Activated CD4-positive, alpha-beta memory T cell treated with anti-CD3 and anti-CD28 coated beads for 36 hours (primary cell): ENCODE measurements at regions of chr9 and their contacts with region 1.

Region 1: GRCh38 chr9:98045234-98046179 is 11.0 kb upstream of the NANS start:
- DNase-seq: peak; percentile 44
- H3K4me3 Mint-ChIP-seq: peak overlapping the region; percentile 84
- H3K27ac Mint-ChIP-seq: peak overlapping the region; percentile 83
- H3K4me1 Mint-ChIP-seq: peaks cover 24% of the 10 kb centered on the region
- H3K27me3 Mint-ChIP-seq: no peaks in the 10 kb centered on the region

Region 2: GRCh38 chr9:98056269-98057137 is 11.0 kb after region 1 on chr9 and contains the start of gene NANS:
- CTCF ChIA-PET with region 1: interaction called, 15 read pairs
- POLR2A ChIA-PET with region 1: interaction called, 36 read pairs
- intact Hi-C with region 1: loop called (anchors 1 kb)
- DNase-seq: peak; percentile 95
- H3K4me3 Mint-ChIP-seq: peak within 1 kb of the TSS; percentile 92
- H3K27ac Mint-ChIP-seq: peak within 1 kb of the TSS; percentile 91
- H3K4me1 Mint-ChIP-seq: peaks cover 19% of the 10 kb centered on the region
- H3K27me3 Mint-ChIP-seq: no peaks in the 10 kb centered on the region
- total RNA-seq, gene NANS: 48.4 to 51.9 TPM

Region 3: GRCh38 chr9:98087420-98088354 is 42.2 kb after region 1 on chr9:
- CTCF ChIA-PET with region 1: no interaction called
- POLR2A ChIA-PET with region 1: no interaction called
- intact Hi-C with region 1: no loop called
- DNase-seq: peak; percentile 44
- H3K4me3 Mint-ChIP-seq: peak overlapping the region; percentile 61
- H3K27ac Mint-ChIP-seq: no peak overlapping the region
- H3K4me1 Mint-ChIP-seq: peaks cover 17% of the 10 kb centered on the region
- H3K27me3 Mint-ChIP-seq: no peaks in the 10 kb centered on the region

Region 4: GRCh38 chr9:98998441-98999151 is 953.1 kb after region 1 on chr9:
- CTCF ChIA-PET with region 1: no interaction called
- POLR2A ChIA-PET with region 1: no interaction called
- intact Hi-C with region 1: no loop called
- DNase-seq: peak; percentile 73
- H3K4me3 Mint-ChIP-seq: no peak overlapping the region
- H3K27ac Mint-ChIP-seq: no peak overlapping the region
- H3K4me1 Mint-ChIP-seq: peaks cover 23% of the 10 kb centered on the region
- H3K27me3 Mint-ChIP-seq: peaks cover 7% of the 10 kb centered on the region